ENCODE measurements at regions of chr17 and their contacts with region 1.

Region 1: DNA sequence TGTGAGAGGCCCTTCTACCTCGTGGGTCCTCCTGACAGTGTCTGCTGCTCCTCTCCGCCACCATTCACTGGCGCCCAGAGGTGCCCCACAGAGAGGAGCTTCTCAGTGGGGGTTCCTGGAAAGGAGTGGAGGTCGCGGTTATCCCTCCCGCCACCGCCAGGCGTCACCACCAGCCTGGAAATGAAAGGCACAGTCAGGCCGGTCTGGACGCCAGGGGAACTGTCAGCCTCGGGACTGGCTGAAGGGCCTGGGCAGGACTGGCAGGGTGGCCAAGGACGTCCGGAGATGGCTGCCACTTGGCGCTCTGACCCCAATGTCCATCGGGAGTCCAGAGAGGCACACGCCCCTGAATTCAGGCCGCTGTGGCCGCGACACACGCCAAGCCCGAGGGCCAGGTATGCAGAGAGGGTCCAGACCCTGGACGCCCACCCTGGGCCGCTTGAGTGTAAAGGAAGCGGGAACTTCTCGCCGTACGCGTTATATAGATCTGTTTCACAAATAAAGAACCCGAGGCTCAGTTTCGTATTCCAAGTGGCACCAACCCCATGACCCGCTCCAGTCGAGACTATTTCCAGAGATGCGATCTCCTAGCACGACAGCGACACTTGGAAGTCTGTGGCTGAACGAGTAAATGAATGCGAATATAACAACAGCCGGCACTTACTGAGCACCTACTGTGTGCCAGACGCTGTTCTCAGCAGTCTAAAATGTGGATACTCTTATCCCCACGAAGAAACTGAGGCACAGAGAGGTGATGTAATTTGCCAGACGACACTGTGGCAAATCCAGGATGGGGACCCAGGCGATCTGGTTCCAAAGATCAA is 7.6 kb upstream of the NXPH3 start:
- DNase-seq: peak; percentile 69 to 84 (median 75)
- H3K4me3 ChIP-seq: peak overlapping the region; percentile 59
- H3K4me3 Mint-ChIP-seq: peak overlapping the region; percentile 48 to 79 (median 66)
- H3K27ac ChIP-seq: no peak overlapping the region
- H3K27ac Mint-ChIP-seq: peak overlapping the region in 4 of 8 donors; percentile 11 to 50 (median 32)
- H3K4me1 ChIP-seq: peaks cover 16% of the 10 kb centered on the region
- H3K4me1 Mint-ChIP-seq: peaks cover 13 to 24% (median 17%) of the 10 kb centered on the region in 3 donors
- H3K27me3 ChIP-seq: no peaks in the 10 kb centered on the region
- H3K27me3 Mint-ChIP-seq: peaks cover 18 to 23% of the 10 kb centered on the region in 2 donors

Region 2: GRCh38 chr17:49515196-49515770 is 52.8 kb before region 1 on chr17:
- CTCF ChIA-PET with region 1: no interaction called
- POLR2A ChIA-PET with region 1: no interaction called
- DNase-seq: no peak
- H3K4me3 ChIP-seq: no peak overlapping the region
- H3K4me3 Mint-ChIP-seq: no peak overlapping the region
- H3K27ac ChIP-seq: no peak overlapping the region
- H3K27ac Mint-ChIP-seq: peak overlapping the region in 1 of 8 donors; percentile 4
- H3K4me1 ChIP-seq: no peaks in the 10 kb centered on the region
- H3K4me1 Mint-ChIP-seq: no peaks in the 10 kb centered on the region
- H3K27me3 ChIP-seq: no peaks in the 10 kb centered on the region
- H3K27me3 Mint-ChIP-seq: peaks cover 6 to 10% of the 10 kb centered on the region in 2 donors

Region 3: GRCh38 chr17:49556223-49556971 is 11.7 kb before region 1 on chr17:
- CTCF ChIA-PET with region 1: interaction called, 19 read pairs
- POLR2A ChIA-PET with region 1: no interaction called
- DNase-seq: peak; percentile 72 to 84 (median 75)
- H3K4me3 ChIP-seq: no peak overlapping the region
- H3K4me3 Mint-ChIP-seq: no peak overlapping the region
- H3K27ac ChIP-seq: no peak overlapping the region
- H3K27ac Mint-ChIP-seq: no peak overlapping the region
- H3K4me1 ChIP-seq: peaks cover 14% of the 10 kb centered on the region
- H3K4me1 Mint-ChIP-seq: peaks cover 5 to 10% (median 10%) of the 10 kb centered on the region in 3 donors
- H3K27me3 ChIP-seq: no peaks in the 10 kb centered on the region
- H3K27me3 Mint-ChIP-seq: peaks cover 1 to 9% of the 10 kb centered on the region in 2 donors

Region 4: GRCh38 chr17:49677933-49678847 is 110.1 kb after region 1 on chr17 and contains the start of gene SPOP:
- CTCF ChIA-PET with region 1: interaction called, 11 read pairs
- POLR2A ChIA-PET with region 1: no interaction called
- DNase-seq: peak; percentile 98 to 100 (median 99)
- H3K4me3 ChIP-seq: peak within 1 kb of the TSS; percentile 87
- H3K4me3 Mint-ChIP-seq: peak within 1 kb of the TSS; percentile 90 to 98 (median 92)
- H3K27ac ChIP-seq: peak within 1 kb of the TSS; percentile 96
- H3K27ac Mint-ChIP-seq: peak within 1 kb of the TSS; percentile 90 to 99 (median 98)
- H3K4me1 ChIP-seq: peaks cover 37% of the 10 kb centered on the region
- H3K4me1 Mint-ChIP-seq: peaks cover 43 to 50% (median 49%) of the 10 kb centered on the region in 3 donors
- H3K27me3 ChIP-seq: no peaks in the 10 kb centered on the region
- H3K27me3 Mint-ChIP-seq: peaks cover 0 to 10% of the 10 kb centered on the region in 2 donors
- total RNA-seq, gene SPOP: 74.8 to 75.1 TPM

Region 5: GRCh38 chr17:49699966-49700575 is 132.0 kb after region 1 on chr17:
- CTCF ChIA-PET with region 1: interaction called, 169 read pairs
- POLR2A ChIA-PET with region 1: interaction called, 5 read pairs
- DNase-seq: no peak
- H3K4me3 ChIP-seq: no peak overlapping the region
- H3K4me3 Mint-ChIP-seq: no peak overlapping the region
- H3K27ac ChIP-seq: no peak overlapping the region
- H3K27ac Mint-ChIP-seq: peak overlapping the region in 4 of 8 donors; percentile 17 to 84 (median 46)
- H3K4me1 ChIP-seq: peaks cover 17% of the 10 kb centered on the region
- H3K4me1 Mint-ChIP-seq: peaks cover 21 to 29% (median 29%) of the 10 kb centered on the region in 3 donors
- H3K27me3 ChIP-seq: no peaks in the 10 kb centered on the region
- H3K27me3 Mint-ChIP-seq: no peaks in the 10 kb centered on the region

Region 6: GRCh38 chr17:49779739-49780231 is 211.7 kb after region 1 on chr17:
- CTCF ChIA-PET with region 1: interaction called, 15 read pairs
- POLR2A ChIA-PET with region 1: no interaction called
- DNase-seq: peak in 1 of 5 donors; percentile 13
- H3K4me3 ChIP-seq: no peak overlapping the region
- H3K4me3 Mint-ChIP-seq: no peak overlapping the region
- H3K27ac ChIP-seq: no peak overlapping the region
- H3K27ac Mint-ChIP-seq: peak overlapping the region in 1 of 8 donors; percentile 43
- H3K4me1 ChIP-seq: no peaks in the 10 kb centered on the region
- H3K4me1 Mint-ChIP-seq: peaks cover 7 to 9% (median 8%) of the 10 kb centered on the region in 3 donors
- H3K27me3 ChIP-seq: no peaks in the 10 kb centered on the region
- H3K27me3 Mint-ChIP-seq: peaks cover 0 to 4% of the 10 kb centered on the region in 2 donors

Region 7: DNA sequence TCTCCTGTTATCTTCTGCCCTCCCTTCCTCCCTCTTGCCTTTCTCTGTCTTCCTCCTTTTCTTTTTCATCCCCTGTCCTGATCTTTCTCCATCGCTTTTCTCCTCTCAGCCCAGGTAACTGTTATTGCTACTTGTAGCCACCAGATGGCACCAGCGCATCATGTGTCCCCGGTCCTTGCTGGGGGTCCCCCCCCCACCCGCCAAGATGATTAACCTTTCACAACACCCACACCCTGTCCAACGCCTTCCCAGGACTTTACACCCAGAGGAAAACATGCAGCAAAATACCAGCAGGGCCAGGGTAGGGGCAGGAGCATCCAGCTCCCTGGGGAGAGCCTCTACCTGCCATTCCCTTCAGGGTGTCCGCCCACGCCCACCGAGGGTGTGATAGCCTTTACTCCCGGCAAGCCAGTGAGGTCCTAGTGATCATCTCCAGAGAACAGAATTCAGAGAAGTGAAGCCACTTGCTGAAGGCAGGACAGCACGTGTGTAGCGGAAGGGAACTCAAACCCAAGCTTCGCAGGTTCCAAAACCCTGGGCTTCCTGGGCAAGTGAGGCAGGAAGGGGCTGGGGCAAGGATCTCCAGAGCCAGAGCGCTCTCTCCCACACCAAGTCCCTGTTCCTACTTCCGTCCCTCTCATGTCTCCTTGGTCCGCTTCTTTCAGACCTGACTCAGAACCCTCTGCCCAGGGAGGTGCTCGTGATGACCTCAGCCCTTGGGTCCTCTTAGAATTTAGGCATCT is 293.2 kb after region 1 on chr17:
- CTCF ChIA-PET with region 1: no interaction called
- POLR2A ChIA-PET with region 1: no interaction called
- DNase-seq: peak; percentile 32 to 57 (median 44)
- H3K4me3 ChIP-seq: no peak overlapping the region
- H3K4me3 Mint-ChIP-seq: no peak overlapping the region
- H3K27ac ChIP-seq: no peak overlapping the region
- H3K27ac Mint-ChIP-seq: peak overlapping the region in 1 of 8 donors; percentile 2
- H3K4me1 ChIP-seq: peaks cover 5% of the 10 kb centered on the region
- H3K4me1 Mint-ChIP-seq: peaks cover 3 to 5% (median 4%) of the 10 kb centered on the region in 3 donors
- H3K27me3 ChIP-seq: no peaks in the 10 kb centered on the region
- H3K27me3 Mint-ChIP-seq: peaks cover 9 to 13% of the 10 kb centered on the region in 2 donors

Measured in CD8-positive, alpha-beta memory T cell (primary cell).